ENCODE measurements at regions of chr22 and their contacts with region 1.

Region 1: GRCh38 chr22:28829358-28830181 is 29.2 kb upstream of the XBP1 start:
- DNase-seq: peak; percentile 84
- H3K4me3 ChIP-seq: no peak overlapping the region
- H3K27ac ChIP-seq: no peak overlapping the region
- H3K4me1 ChIP-seq: peaks cover 5% of the 10 kb centered on the region
- CTCF ChIP-seq: peak; percentile 99

Region 2: DNA sequence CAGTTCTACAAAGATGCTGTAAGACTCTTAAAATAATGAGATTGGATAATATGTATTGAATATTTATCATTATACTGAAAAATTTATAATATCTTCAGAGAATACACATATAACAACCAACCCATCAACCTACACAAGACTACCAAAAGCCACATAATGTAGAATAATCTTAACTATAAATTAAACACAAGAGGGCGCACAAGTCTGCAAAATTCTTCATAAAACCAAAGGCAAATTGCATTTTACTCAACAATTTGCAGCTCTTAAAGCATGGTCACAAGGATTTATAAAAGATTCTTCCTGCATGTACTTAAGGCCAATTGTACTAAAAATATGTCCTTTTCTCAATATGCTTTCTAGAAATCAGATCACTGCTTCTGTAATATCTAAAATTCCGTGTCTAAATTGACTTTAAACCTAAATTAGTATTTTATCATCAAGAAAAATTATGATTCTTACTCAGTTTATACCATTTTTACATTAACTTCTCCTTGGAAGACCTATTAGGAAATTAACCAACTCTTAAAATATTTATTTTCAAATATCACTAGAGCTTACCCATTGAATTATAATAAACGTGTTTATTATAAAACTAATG is 228.9 kb before region 1 on chr22:
- CTCF ChIA-PET with region 1: no interaction called
- POLR2A ChIA-PET with region 1: interaction called, 3 read pairs
- intact Hi-C with region 1: loop called (anchors 1 kb)
- DNase-seq: peak; percentile 72
- H3K4me3 ChIP-seq: no peak overlapping the region
- H3K27ac ChIP-seq: no peak overlapping the region
- H3K4me1 ChIP-seq: no peaks in the 10 kb centered on the region
- CTCF ChIP-seq: peak; percentile 91

Region 3: GRCh38 chr22:28772633-28773460 is 56.7 kb before region 1 on chr22 and contains the start of gene CCDC117:
- CTCF ChIA-PET with region 1: no interaction called
- POLR2A ChIA-PET with region 1: no interaction called
- intact Hi-C with region 1: loop called (anchors 10 kb)
- DNase-seq: peak; percentile 95
- H3K4me3 ChIP-seq: peak within 1 kb of the TSS; percentile 90
- H3K27ac ChIP-seq: peak within 1 kb of the TSS; percentile 68
- H3K4me1 ChIP-seq: peaks cover 5% of the 10 kb centered on the region
- CTCF ChIP-seq: 0 out of 2 replicates have a peak, but pooled peaks have one; percentile 28
- total RNA-seq, gene CCDC117: 19.5 and 21.4 TPM in 2 replicates

Measured in OCI-LY7 (cell line).